IMR-90 (cell line): ENCODE measurements at regions of chr2 and their contacts with region 1.

Region 1: DNA sequence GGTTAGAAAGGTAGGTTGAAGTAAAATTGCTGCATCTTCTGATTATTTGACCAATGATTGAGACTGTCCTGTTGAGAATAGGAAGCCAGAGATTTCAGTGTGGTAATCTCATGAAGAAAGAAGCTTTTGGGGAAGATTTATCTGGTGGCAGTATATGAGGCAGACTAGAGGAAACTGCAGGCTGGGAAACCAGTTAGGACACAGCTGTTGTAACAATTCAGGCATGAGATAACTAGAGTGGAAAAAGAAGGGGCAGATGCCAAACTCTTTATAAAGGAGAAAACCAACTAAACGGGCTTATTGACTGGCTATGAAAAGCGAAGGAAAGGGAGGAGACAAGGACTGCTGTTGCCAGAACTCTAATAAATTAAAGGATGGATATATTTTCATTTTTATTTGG is 155.6 kb downstream of the TTC27 start:
- DNase-seq: no peak
- ATAC-seq: no peak
- H3K4me3 ChIP-seq: no peak overlapping the region
- H3K27ac ChIP-seq: no peak overlapping the region
- H3K4me1 ChIP-seq: peaks cover 2% of the 10 kb centered on the region; the same call in 1 of the 2 replicates
- H3K27me3 ChIP-seq: no peaks in the 10 kb centered on the region
- CTCF ChIP-seq: no peak
- POLR2A ChIP-seq: no peak
- RAD21 ChIP-seq: no peak

Region 2: GRCh38 chr2:33267756-33268155 is 484.3 kb after region 1 on chr2:
- CTCF ChIA-PET with region 1: no interaction called
- POLR2A ChIA-PET with region 1: no interaction called
- dilution Hi-C with region 1: no loop called
- in situ Hi-C with region 1: loop called (anchors 10 kb)
- intact Hi-C with region 1: no loop called
- DNase-seq: peak; percentile 39
- ATAC-seq: no peak
- H3K4me3 ChIP-seq: no peak overlapping the region
- H3K27ac ChIP-seq: no peak overlapping the region
- H3K4me1 ChIP-seq: peaks cover 4% of the 10 kb centered on the region
- H3K27me3 ChIP-seq: no peaks in the 10 kb centered on the region
- CTCF ChIP-seq: no peak
- POLR2A ChIP-seq: no peak
- RAD21 ChIP-seq: no peak